ENCODE measurements at regions of chr5 and their contacts with region 1.

Region 1: GRCh38 chr5:96279801-96280542 is 153.1 kb downstream of the PCSK1 start:
- DNase-seq: peak; percentile 51
- H3K4me3 Mint-ChIP-seq: peak overlapping the region; percentile 7
- H3K27ac Mint-ChIP-seq: peak overlapping the region; percentile 31
- H3K4me1 Mint-ChIP-seq: peaks cover 26% of the 10 kb centered on the region
- H3K27me3 Mint-ChIP-seq: peaks cover 29% of the 10 kb centered on the region

Region 2: DNA sequence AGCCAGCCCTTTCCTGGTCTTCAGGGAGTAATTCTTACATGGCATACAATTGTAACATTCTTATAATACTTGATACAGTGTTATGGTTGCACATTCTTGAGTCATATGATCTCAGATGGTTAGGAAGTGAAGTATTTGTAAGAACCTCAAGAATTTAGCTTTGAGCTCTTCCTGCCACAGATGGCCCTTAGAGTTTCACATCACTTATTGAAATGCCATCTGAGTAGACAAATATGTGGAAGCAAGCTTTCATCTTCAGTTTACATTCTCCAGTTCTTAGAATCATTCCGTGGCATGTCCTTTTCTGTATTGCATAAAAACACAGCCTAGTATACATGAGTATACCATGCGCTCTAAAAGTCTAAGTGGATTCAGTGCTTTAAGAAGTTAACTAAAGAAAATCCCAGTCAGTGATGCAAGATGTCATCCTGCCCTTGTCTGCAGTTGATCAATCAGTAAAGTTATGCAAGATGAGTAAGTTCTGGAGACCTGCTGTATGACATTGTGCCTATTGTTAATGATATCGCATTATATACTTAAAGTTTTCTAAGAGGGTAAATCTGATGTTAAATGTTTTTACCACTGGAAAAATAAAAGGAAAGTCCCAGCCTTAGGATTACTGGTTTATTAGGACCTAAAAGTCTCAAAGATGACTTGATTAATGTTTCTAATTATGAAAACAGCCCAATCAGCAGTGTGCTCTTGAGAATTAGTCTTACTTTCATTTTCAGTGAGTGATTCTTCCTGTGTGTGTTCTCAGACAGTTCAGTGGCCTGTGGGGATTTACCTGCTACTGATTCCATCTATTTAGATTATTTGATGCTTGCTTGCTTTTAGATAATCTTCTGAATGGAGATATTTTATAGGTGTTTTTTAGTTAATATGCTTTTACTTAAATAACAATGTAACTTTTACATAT is 519.4 kb before region 1 on chr5:
- CTCF ChIA-PET with region 1: no interaction called
- POLR2A ChIA-PET with region 1: no interaction called
- intact Hi-C with region 1: loop called (anchors 5 kb)
- DNase-seq: no peak
- H3K4me3 Mint-ChIP-seq: peak overlapping the region; percentile 57
- H3K27ac Mint-ChIP-seq: peak overlapping the region; percentile 64
- H3K4me1 Mint-ChIP-seq: peaks cover 23% of the 10 kb centered on the region
- H3K27me3 Mint-ChIP-seq: peaks cover 4% of the 10 kb centered on the region

Region 3: GRCh38 chr5:95858661-95859326 is 421.2 kb before region 1 on chr5:
- CTCF ChIA-PET with region 1: no interaction called
- POLR2A ChIA-PET with region 1: no interaction called
- intact Hi-C with region 1: loop called (anchors 1 kb)
- DNase-seq: peak; percentile 97
- H3K4me3 Mint-ChIP-seq: peak overlapping the region; percentile 40
- H3K27ac Mint-ChIP-seq: peak overlapping the region; percentile 68
- H3K4me1 Mint-ChIP-seq: peaks cover 55% of the 10 kb centered on the region
- H3K27me3 Mint-ChIP-seq: no peaks in the 10 kb centered on the region

Region 4: DNA sequence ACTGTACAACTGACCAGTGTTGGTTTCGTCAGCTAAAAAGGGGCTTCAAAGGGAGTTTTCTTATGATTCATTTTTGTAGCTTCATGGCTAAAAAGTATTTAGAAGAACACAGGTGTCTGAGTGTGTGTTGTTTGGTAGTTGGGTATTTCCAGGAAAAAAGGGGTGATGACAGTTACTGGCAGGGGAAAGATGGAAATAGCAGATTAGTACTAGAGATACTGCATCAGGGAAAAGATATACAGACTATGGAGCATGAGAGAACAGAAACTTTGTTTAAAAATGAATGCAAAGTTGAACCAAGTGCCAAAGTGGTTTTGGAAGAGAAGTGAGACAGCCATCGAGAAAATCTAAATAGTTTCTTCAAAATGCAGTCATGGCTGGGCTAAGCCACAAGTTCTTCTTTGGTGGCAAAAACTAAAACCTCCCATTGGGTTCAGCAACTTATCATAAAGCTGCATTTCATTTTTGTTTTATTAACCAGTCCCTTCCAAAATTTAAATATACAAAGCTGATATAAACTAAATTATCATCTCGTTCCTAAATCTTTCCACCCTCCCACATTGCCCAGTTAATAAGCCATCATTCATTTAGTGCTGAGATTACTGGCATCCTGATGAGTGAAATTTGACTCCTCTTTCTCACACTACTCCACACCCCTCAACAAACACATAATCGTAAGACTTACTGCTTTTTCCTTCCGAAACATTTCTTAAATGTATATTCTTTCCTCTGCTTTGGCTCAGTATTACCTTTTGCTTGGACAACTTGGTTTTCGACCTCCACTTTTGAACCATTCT is 351.8 kb before region 1 on chr5:
- CTCF ChIA-PET with region 1: no interaction called
- POLR2A ChIA-PET with region 1: no interaction called
- intact Hi-C with region 1: loop called (anchors 1 kb)
- DNase-seq: no peak
- H3K4me3 Mint-ChIP-seq: no peak overlapping the region
- H3K27ac Mint-ChIP-seq: peak overlapping the region; percentile 84
- H3K4me1 Mint-ChIP-seq: peaks cover 46% of the 10 kb centered on the region
- H3K27me3 Mint-ChIP-seq: no peaks in the 10 kb centered on the region

Region 5: DNA sequence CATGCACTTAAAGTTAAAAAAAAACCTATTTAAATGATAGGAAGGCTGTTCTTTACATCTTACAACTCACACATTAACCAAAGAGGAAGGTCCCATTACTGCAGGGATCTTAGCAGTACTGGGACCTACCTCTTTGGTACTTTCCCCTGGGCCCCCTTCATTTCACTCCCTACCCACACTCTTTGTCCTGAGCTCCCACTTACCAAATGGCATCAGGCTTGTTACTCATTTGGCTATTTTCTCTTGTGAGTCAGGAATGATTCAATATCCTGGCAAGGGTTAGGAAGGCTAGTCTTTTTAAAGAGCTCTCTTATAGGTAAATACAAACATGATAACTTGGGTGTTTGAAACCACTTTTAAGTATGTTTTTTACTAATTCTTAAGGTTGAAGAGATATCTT is 200.9 kb before region 1 on chr5:
- CTCF ChIA-PET with region 1: no interaction called
- POLR2A ChIA-PET with region 1: no interaction called
- intact Hi-C with region 1: loop called (anchors 1 kb)
- DNase-seq: peak; percentile 67
- H3K4me3 Mint-ChIP-seq: no peak overlapping the region
- H3K27ac Mint-ChIP-seq: peak overlapping the region; percentile 89
- H3K4me1 Mint-ChIP-seq: peaks cover 45% of the 10 kb centered on the region
- H3K27me3 Mint-ChIP-seq: peaks cover 5% of the 10 kb centered on the region

Region 6: DNA sequence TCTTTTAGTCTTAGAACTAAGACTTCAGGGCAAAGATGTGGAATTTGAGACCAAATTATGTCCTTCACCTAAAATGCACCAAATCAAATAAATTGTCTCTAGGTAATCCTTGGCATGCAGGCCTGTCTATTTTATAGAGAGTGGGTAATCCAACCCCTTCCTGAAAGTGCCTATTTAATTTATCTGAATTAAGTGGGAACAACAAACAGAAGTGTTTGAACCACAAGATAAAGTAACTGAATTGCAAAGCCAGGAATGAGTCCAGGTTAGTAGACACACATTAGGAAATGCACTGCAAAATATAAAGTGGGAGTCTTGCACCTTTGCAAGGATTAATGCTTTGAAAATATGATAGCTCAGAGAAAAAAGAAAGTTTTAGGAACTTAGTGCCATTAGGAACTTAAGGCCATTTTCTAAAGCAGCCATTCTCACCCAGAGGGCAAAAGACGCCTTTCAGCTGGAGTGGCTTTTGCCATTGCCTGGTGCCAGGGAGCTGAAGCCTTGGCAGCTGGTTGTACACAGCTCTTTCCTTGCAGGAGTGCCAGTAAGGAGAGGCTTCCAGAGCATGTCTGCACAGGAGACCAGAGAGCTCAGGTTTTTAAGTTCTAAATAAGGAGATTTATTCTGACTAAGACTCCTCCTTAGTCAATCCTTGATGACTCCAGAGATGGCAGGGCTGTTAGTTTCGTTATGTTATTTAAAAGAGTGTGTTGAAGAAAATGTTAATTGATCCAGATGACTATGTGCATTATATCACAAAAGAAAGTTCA is 166.6 kb before region 1 on chr5:
- CTCF ChIA-PET with region 1: no interaction called
- POLR2A ChIA-PET with region 1: no interaction called
- intact Hi-C with region 1: loop called (anchors 1 kb)
- DNase-seq: peak; percentile 13
- H3K4me3 Mint-ChIP-seq: no peak overlapping the region
- H3K27ac Mint-ChIP-seq: no peak overlapping the region
- H3K4me1 Mint-ChIP-seq: peaks cover 41% of the 10 kb centered on the region
- H3K27me3 Mint-ChIP-seq: peaks cover 4% of the 10 kb centered on the region

Region 7: DNA sequence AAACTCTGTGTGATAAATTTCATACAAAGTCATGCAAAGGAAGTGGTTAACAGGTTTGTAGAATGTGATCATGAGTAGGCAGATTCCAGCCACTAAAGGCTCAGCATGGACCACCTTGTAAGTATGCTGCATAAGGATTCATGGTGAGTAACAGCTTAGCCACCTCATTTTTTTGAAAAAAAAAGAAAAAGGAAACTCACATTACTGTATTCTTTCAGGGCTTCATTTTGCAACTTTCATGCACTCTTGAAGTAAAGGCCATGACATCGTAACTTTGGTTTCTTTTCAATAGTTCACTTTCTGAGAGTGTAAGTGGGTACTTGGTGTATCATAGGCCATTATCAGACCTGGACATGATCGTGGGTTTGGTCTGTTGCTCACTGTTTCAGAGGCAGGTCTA is 22.1 kb before region 1 on chr5:
- CTCF ChIA-PET with region 1: no interaction called
- POLR2A ChIA-PET with region 1: no interaction called
- intact Hi-C with region 1: loop called (anchors 1 kb)
- DNase-seq: peak; percentile 9
- H3K4me3 Mint-ChIP-seq: no peak overlapping the region
- H3K27ac Mint-ChIP-seq: no peak overlapping the region
- H3K4me1 Mint-ChIP-seq: peaks cover 11% of the 10 kb centered on the region
- H3K27me3 Mint-ChIP-seq: peaks cover 8% of the 10 kb centered on the region

Region 8: DNA sequence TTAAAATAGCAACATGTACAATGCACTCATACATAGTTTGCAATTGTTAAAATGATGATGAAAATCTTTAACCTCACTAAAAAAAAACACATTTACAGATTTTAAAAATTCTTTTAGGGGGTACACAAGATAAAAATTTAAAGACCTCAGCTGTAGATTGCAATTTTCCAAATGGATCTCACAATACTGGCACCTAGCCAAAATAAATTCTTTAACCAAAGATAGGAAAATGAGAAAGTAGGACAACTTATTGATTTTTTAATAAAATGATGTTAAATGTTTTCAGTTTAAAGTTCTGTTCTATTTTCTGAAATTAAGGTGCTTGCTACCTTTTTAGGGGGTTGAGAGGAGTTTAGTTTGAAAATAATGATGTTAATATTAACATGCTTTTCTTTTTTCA is 63.1 kb after region 1 on chr5:
- CTCF ChIA-PET with region 1: no interaction called
- POLR2A ChIA-PET with region 1: no interaction called
- intact Hi-C with region 1: no loop called
- DNase-seq: no peak
- H3K4me3 Mint-ChIP-seq: no peak overlapping the region
- H3K27ac Mint-ChIP-seq: no peak overlapping the region
- H3K4me1 Mint-ChIP-seq: peaks cover 31% of the 10 kb centered on the region
- H3K27me3 Mint-ChIP-seq: peaks cover 31% of the 10 kb centered on the region

Region 9: DNA sequence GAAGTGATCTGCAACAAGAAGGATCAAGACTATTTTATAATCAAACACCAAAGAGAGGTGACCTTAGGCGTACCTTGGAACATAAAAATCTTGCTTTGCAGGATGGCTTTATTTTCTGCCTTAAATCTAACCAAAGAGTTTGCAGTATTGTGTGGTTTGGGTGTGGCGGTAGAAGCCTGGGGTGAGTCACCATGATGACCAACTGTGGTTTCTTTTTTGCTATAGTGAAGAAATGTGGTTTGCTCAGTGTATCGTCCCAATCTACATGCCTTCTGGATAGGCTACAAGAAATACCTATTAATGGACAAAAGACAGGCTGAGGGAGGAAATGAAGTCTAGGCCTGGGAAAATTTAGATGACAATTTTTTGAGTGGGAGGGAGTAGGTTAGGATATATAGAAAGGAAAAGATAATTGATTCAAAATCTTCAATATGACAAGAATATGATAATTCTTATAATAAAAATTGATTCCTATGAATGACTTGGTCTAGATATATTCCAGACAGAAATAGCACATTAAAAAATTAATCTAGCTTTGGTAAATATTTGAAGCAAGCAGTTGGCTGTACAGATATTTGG is 377.2 kb after region 1 on chr5:
- CTCF ChIA-PET with region 1: no interaction called
- POLR2A ChIA-PET with region 1: no interaction called
- intact Hi-C with region 1: no loop called
- DNase-seq: peak; percentile 77
- H3K4me3 Mint-ChIP-seq: peak overlapping the region; percentile 31
- H3K27ac Mint-ChIP-seq: peak overlapping the region; percentile 58
- H3K4me1 Mint-ChIP-seq: peaks cover 34% of the 10 kb centered on the region
- H3K27me3 Mint-ChIP-seq: peaks cover 36% of the 10 kb centered on the region

Measured in activated CD4-positive, alpha-beta memory T cell treated with anti-CD3 and anti-CD28 coated beads for 36 hours (primary cell).